ENCODE measurements at regions of chr1 and their contacts with region 1.

Region 1: GRCh38 chr1:85581802-85582686 is 1.5 kb downstream of the CCN1 start:
- DNase-seq: peak; percentile 89
- ATAC-seq: peak; percentile 25
- H3K4me3 ChIP-seq: peak overlapping the region; percentile 97
- H3K27ac ChIP-seq: peak overlapping the region; percentile 74
- H3K4me1 ChIP-seq: peaks cover 55% of the 10 kb centered on the region
- H3K27me3 ChIP-seq: no peaks in the 10 kb centered on the region
- CTCF ChIP-seq: peak; percentile 64

Region 2: DNA sequence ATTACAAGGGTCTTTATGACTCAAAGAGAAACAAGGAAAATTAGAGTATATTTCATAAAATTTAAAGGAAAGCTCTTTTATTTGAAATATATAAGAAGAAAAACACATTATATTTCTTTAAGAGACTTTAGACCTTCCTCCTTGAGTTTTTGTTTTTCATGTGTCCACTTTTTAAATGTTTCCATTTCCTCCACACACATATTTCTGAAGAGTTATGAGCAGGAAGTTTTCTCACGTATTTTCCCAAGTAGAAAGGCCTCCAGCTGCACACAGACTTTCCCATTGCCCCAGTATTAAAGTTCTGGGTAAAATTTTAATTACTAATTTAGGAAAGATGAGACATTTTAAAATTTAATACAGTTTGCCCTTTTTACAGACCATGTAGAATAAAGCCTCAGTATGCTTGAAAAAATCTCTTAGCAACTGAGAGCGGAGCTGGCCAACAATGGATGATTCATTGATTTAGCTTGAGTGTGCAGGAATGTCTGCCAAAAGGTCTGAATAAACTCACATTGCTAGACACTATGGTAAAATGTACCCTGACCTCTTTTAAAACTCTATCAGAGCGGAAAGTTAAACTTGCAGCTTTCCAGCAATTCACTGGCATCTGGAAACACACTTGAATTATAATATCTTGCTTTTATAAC is 175.0 kb before region 1 on chr1:
- CTCF ChIA-PET with region 1: no interaction called
- POLR2A ChIA-PET with region 1: interaction called, 20 read pairs
- intact Hi-C with region 1: loop called (anchors 2 kb)
- DNase-seq: peak; percentile 91
- ATAC-seq: peak; percentile 99
- H3K4me3 ChIP-seq: peak overlapping the region; percentile 54
- H3K27ac ChIP-seq: peak overlapping the region; percentile 70
- H3K4me1 ChIP-seq: peaks cover 18% of the 10 kb centered on the region
- H3K27me3 ChIP-seq: no peaks in the 10 kb centered on the region
- CTCF ChIP-seq: no peak

Region 3: GRCh38 chr1:85607126-85607912 is 25.3 kb after region 1 on chr1:
- CTCF ChIA-PET with region 1: no interaction called
- POLR2A ChIA-PET with region 1: interaction called, 18 read pairs
- intact Hi-C with region 1: loop called (anchors 1 kb)
- DNase-seq: peak; percentile 99
- ATAC-seq: peak; percentile 84
- H3K4me3 ChIP-seq: no peak overlapping the region
- H3K27ac ChIP-seq: peak overlapping the region; percentile 85
- H3K4me1 ChIP-seq: peaks cover 58% of the 10 kb centered on the region
- H3K27me3 ChIP-seq: no peaks in the 10 kb centered on the region
- CTCF ChIP-seq: no peak

Region 4: GRCh38 chr1:85628791-85629531 is 46.9 kb after region 1 on chr1:
- CTCF ChIA-PET with region 1: interaction called, 12 read pairs
- POLR2A ChIA-PET with region 1: interaction called, 31 read pairs
- intact Hi-C with region 1: loop called (anchors 1 kb)
- DNase-seq: peak; percentile 86
- ATAC-seq: peak; percentile 94
- H3K4me3 ChIP-seq: peak overlapping the region; percentile 47
- H3K27ac ChIP-seq: peak overlapping the region; percentile 97
- H3K4me1 ChIP-seq: peaks cover 34% of the 10 kb centered on the region
- H3K27me3 ChIP-seq: no peaks in the 10 kb centered on the region
- CTCF ChIP-seq: no peak

Region 5: DNA sequence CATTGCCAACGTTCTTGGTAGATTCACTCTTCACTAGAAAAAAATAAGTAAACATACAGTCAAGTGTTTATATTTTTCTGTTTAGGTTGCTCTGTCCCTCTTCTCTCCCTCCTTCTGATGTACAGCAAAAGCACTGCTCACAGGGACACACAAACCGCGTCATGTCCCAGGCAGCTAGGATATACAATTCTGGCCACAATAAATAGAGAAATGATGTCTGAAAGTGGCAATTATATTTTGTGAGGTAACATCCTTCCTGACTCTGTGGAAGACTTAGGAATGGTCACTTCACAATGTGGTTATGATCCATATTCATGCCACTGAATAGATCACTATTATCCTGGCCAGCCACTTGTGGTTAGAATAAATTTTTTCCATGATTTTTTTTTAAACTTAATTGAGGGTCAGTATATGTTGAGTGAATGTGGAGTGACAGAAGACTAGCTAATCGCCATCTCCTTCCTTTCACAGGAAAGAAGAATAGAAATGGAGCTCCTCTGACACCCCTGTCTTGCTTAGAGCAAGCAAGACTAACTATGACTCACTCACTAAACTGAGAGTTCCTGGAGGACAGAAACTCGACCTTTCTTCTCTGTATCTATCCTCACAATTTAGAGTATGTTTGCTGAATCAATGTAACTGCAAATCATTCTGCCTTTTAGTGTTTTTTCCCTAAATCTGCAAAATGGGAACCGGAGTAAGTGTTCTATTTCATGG is 72.2 kb after region 1 on chr1:
- CTCF ChIA-PET with region 1: interaction called, 3 read pairs
- POLR2A ChIA-PET with region 1: interaction called, 13 read pairs
- intact Hi-C with region 1: loop called (anchors 2 kb)
- DNase-seq: peak; percentile 82
- ATAC-seq: peak; percentile 81
- H3K4me3 ChIP-seq: 0 out of 2 replicates have a peak overlapping the region, but pooled peaks have one; percentile 4
- H3K27ac ChIP-seq: peak overlapping the region; percentile 81
- H3K4me1 ChIP-seq: peaks cover 43% of the 10 kb centered on the region
- H3K27me3 ChIP-seq: no peaks in the 10 kb centered on the region
- CTCF ChIP-seq: no peak

Region 6: DNA sequence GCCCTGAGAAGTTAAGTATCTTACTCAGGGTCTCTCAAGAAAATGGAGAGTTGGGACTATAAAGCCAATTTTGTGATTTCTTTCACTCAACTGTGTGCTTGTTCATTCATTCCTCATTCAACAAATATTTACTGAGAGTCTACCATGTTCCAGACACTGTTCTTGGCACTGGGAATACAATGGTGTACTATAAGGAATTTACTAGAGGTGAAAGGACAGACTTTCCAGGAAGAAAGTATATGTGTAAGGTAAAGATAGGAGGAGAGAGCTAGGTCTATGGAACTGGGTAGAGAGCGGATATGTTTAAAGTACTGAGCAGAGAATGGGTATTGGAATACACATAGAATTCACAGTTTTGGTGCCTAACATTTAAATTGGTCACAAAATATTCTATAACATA is 83.9 kb after region 1 on chr1:
- CTCF ChIA-PET with region 1: no interaction called
- POLR2A ChIA-PET with region 1: no interaction called
- intact Hi-C with region 1: no loop called
- DNase-seq: peak; percentile 17
- ATAC-seq: peak; percentile 59; the same call in 1 of the 2 replicates
- H3K4me3 ChIP-seq: no peak overlapping the region
- H3K27ac ChIP-seq: no peak overlapping the region
- H3K4me1 ChIP-seq: peaks cover 25% of the 10 kb centered on the region
- H3K27me3 ChIP-seq: no peaks in the 10 kb centered on the region
- CTCF ChIP-seq: no peak

Region 7: GRCh38 chr1:85884372-85885035 is 302.5 kb after region 1 on chr1:
- CTCF ChIA-PET with region 1: no interaction called
- POLR2A ChIA-PET with region 1: no interaction called
- intact Hi-C with region 1: loop called (anchors 2 kb)
- DNase-seq: peak; percentile 61
- ATAC-seq: peak; percentile 84
- H3K4me3 ChIP-seq: no peak overlapping the region
- H3K27ac ChIP-seq: no peak overlapping the region
- H3K4me1 ChIP-seq: peaks cover 7% of the 10 kb centered on the region; the same call in 1 of the 2 replicates
- H3K27me3 ChIP-seq: no peaks in the 10 kb centered on the region
- CTCF ChIP-seq: peak; percentile 74